ENCODE measurements at regions of chr7 and their contacts with region 1.

Region 1: GRCh38 chr7:37365405-37365804 is 83.3 kb downstream of the ELMO1 start:
- DNase-seq: no peak
- H3K4me3 Mint-ChIP-seq: peak overlapping the region; percentile 15
- H3K27ac Mint-ChIP-seq: peak overlapping the region; percentile 99
- H3K4me1 Mint-ChIP-seq: peaks cover 88% of the 10 kb centered on the region
- H3K27me3 Mint-ChIP-seq: no peaks in the 10 kb centered on the region

Region 2: DNA sequence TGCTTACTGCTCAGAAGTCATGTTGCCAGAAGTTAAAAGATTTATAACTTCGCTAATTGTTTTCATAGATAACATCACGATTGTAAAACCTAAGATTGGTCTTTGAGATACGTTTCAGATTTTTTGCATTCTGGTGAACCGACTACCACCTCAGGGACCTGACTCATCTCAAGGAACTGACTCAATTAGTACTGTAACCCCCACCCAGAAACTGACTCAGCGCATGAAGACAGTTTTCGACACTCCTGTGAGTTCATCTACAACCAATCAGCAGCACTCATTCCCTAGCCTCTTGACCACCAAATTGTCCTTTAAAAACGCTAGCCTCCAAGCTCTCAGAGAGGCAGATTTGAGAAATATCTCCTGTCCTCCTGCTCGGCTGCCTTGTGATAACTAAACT is 11.0 kb after region 1 on chr7:
- CTCF ChIA-PET with region 1: interaction called, 4 read pairs
- intact Hi-C with region 1: loop called (anchors 1 kb)
- DNase-seq: peak; percentile 69
- H3K4me3 Mint-ChIP-seq: no peak overlapping the region
- H3K27ac Mint-ChIP-seq: peak overlapping the region; percentile 65
- H3K4me1 Mint-ChIP-seq: peaks cover 68% of the 10 kb centered on the region
- H3K27me3 Mint-ChIP-seq: no peaks in the 10 kb centered on the region

Region 3: DNA sequence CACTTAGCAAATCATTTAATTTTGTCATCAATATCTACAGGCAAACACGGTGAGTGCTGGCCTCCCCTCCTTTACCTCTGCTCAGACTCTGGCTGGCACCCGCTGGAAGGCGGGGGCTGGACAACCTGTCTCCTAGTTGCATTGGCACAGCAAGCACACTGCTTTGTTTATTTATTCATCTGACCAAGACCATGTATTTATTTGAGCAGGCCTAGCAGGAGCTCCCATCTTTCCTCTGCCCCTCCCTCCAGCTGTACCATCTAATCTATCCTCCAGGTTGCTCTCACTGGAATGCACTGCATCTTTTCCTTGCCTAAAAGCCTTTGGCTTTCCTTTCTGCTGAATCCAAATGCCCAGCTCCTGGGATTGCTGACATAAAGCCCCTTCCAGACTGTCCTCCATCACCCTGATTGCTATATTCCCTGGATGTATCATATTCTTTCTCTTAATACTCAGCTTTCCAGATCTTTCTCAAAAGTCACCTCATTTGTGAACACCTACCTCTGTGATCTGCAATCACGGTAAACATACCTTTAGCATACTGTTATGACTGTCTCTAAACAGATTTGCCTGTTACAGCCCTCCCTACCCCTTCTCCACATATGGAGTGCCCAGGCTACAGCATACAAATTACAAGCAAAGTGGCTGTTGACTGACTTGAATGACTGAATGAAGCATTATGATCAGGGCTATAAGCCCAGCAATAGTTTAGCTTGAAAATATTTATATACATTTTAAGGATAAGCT is 73.7 kb after region 1 on chr7:
- CTCF ChIA-PET with region 1: interaction called, 5 read pairs
- intact Hi-C with region 1: loop called (anchors 1 kb)
- DNase-seq: no peak
- H3K4me3 Mint-ChIP-seq: no peak overlapping the region
- H3K27ac Mint-ChIP-seq: peak overlapping the region; percentile 97
- H3K4me1 Mint-ChIP-seq: peaks cover 92% of the 10 kb centered on the region
- H3K27me3 Mint-ChIP-seq: no peaks in the 10 kb centered on the region

Region 4: GRCh38 chr7:37480041-37481031 is 114.9 kb after region 1 on chr7:
- CTCF ChIA-PET with region 1: no interaction called
- intact Hi-C with region 1: no loop called
- DNase-seq: no peak
- H3K4me3 Mint-ChIP-seq: no peak overlapping the region
- H3K27ac Mint-ChIP-seq: no peak overlapping the region
- H3K4me1 Mint-ChIP-seq: no peaks in the 10 kb centered on the region
- H3K27me3 Mint-ChIP-seq: peaks cover 4% of the 10 kb centered on the region

Measured in activated naive CD4-positive, alpha-beta T cell treated with anti-CD3 and anti-CD28 coated beads for 36 hours (primary cell).